ENCODE measurements at regions of chrX and their contacts with region 1.

Region 1: GRCh38 chrX:20442597-20442996 is 175.9 kb upstream of the RPS6KA3 start:
- DNase-seq: peak; percentile 59 to 91 (median 78)
- ATAC-seq: peak; percentile 69 to 99 (median 94)
- H3K4me3 ChIP-seq: no peak overlapping the region
- H3K27ac ChIP-seq: no peak overlapping the region
- H3K4me1 ChIP-seq: no peaks in the 10 kb centered on the region
- H3K27me3 ChIP-seq: peaks cover 0 to 9% (median 0%) of the 10 kb centered on the region in 4 donors
- CTCF ChIP-seq: peak; percentile 52 to 66 (median 58)

Region 2: DNA sequence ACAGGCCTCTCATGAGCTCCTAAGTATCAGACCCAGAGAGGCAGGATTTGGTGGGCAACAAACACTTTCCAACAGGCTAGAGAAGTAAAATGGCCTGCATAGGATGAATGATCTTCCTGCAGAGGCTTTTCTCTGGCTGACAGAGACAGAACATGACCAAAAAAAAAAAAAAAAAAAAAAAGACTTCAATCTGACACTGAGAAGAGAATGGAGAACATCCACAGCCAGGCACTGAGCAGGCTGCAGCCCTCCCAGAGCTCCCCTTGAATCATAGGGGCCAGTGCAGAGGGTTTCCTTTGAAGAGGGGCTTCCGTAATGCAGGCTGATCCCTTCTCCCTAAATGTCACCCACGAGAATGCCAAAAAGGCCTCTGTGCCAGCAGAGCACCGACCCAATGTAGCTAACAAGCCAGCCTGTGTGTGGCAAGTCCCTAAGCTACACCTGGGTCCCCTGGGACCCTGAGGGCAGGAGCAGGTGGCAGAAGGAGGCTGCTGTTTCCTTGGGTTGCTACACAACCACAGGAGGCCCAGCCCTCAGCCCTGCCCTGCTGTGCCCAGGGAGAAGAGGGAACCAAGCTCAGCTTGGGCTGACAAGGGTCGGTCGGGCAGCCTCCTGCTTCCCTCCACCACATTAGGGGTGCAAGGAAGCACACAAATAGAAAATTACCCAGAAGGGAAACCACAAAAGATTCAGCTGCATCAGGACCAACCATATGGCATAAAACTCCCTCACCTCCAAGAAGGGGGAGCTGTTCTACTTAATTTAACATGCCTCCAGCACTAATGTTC is 381.4 kb before region 1 on chrX:
- intact Hi-C with region 1: no loop called
- DNase-seq: peak in 1 of 6 donors; percentile 30
- ATAC-seq: peak in 1 of 4 donors; percentile 24
- H3K4me3 ChIP-seq: no peak overlapping the region
- H3K27ac ChIP-seq: no peak overlapping the region
- H3K4me1 ChIP-seq: no peaks in the 10 kb centered on the region
- H3K27me3 ChIP-seq: no peaks in the 10 kb centered on the region
- CTCF ChIP-seq: no peak

Region 3: DNA sequence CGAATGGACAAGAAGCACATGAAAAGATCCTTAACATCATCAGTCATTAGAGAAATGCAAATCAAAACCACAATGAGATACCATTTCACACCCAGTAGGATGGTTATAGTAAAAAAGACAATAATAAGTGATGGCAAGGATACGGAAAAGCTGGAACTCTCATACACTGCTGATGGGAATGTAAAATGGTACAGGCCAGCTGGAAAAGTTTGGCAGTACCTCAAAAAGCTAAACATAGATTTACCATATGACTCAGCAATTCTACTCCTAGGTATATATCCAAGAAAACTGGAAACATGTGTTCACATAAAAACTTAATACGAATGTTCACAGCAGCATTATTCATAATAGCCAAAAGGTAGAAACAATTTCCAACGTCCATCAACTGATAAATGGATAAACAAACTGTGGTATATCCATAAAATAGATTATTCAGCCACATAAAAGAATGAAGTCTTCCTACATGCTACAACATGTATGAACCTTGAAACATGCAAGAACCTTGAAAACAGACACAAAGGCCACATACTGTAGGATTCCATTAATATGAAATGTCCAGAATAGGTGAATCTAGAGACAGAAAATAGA is 187.8 kb before region 1 on chrX:
- intact Hi-C with region 1: loop called in 2 of 3 experiments (anchors 5 to 10 kb)
- DNase-seq: no peak
- ATAC-seq: peak; percentile 46 to 62 (median 56)
- H3K4me3 ChIP-seq: no peak overlapping the region
- H3K27ac ChIP-seq: no peak overlapping the region
- H3K4me1 ChIP-seq: no peaks in the 10 kb centered on the region
- H3K27me3 ChIP-seq: peaks cover 0 to 3% (median 0%) of the 10 kb centered on the region in 4 donors
- CTCF ChIP-seq: no peak

Region 4: DNA sequence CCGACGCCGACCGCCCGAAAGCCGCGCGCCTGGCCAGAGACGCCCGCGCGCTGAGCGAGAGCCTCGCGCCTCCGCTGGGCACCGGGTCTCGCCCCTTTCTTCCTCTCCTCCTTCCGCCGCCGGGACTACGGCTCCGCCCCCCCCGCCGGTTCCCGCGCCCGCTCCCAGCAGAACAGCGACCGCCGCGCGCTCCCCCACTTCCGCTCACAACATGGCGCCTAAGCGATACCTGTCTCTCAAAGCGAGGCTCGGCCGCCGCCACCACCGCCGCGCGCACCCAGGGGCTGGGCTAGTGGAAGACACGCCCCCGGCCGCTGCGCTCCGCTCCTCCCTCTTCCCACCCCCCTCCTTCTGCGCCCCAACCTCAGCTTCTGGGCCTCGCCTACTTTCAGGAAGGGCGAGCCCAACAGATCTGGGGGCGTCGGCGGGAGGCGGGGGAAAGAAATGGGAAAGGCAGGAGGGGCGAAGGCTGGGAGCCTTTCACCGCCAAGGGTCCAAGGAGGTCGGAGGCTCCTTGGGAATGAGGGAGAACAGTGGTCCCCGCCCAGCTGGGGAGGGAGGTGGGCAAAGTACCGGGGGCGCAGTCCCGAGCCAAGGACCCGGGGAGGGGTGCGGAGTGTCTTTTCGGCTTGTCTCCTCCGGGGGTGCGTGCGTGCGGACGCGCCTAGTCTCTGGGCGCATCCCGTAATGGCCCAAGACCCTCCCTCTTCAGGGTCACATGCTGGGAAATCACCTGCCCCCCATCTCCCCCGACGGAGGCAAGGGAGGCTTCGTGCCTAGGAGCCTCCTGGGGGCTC is 175.6 kb before region 1 on chrX and contains the start of gene RPS6KA3:
- intact Hi-C with region 1: loop called in 1 of 3 experiments (anchors 10 kb)
- DNase-seq: peak; percentile 86 to 94 (median 91)
- ATAC-seq: peak; percentile 89 to 94 (median 92)
- H3K4me3 ChIP-seq: peak within 1 kb of the TSS; percentile 29 to 59 (median 40)
- H3K27ac ChIP-seq: peak within 1 kb of the TSS; percentile 41 to 84 (median 78)
- H3K4me1 ChIP-seq: peaks cover 0 to 7% (median 0%) of the 10 kb centered on the region in 3 donors
- H3K27me3 ChIP-seq: peaks cover 0 to 4% (median 0%) of the 10 kb centered on the region in 4 donors
- CTCF ChIP-seq: no peak
- total RNA-seq, gene RPS6KA3: 15.0 to 29.8 (median 18.9) TPM

Region 5: DNA sequence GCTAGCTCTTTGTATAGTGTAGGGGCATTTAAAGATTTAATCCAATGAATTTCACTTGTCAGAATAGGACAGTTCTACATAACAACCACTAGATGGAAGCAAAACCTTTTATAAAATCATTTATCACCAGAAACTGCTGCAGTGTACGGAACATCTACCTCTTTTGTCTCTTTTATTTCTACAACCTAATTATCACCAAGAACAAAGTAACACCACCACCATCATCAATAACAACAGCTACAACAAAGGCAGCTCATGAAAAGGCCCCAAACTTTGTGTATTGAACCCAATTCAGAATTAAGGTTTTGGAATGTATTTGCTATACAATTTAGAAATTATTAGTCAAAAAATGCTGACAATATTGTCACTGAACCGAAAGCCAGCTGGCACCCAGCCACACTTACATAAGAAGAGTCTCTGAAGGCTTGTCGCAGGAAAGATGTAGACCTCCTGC is 85.0 kb after region 1 on chrX:
- intact Hi-C with region 1: no loop called
- DNase-seq: no peak
- ATAC-seq: peak; percentile 53 to 86 (median 80)
- H3K4me3 ChIP-seq: no peak overlapping the region
- H3K27ac ChIP-seq: no peak overlapping the region
- H3K4me1 ChIP-seq: no peaks in the 10 kb centered on the region
- H3K27me3 ChIP-seq: peaks cover 0 to 5% (median 0%) of the 10 kb centered on the region in 4 donors
- CTCF ChIP-seq: peak; percentile 34 to 64 (median 49)